ENCODE measurements at regions of chr3 and their contacts with region 1.

Region 1: DNA sequence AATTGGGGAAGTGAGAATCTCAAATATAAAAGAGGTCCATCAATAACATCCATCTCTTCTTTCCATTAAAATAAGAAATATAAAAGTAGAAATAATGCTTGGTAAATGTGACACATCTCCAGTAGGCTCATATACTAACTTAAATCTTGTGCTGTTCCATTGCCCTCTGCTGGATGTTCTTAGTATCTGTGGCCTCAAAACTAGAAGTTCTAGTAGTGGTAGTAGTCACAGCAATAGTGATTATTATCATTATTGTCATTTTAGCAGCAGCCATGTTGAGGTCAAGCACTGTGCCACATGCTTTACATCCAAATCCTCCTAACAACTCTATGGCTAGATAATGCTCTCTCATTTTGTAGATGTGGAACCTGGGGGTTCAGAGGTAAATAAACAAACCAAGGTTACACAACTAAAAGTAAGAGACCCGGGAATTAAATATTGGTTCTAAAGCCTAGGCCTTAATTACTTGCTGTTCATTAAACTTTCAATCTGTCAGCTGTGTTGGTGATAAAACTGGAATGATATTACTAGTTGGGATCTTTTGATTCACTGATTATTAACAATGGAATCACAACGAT is 20.2 kb upstream of the BTLA start:
- DNase-seq: peak in 4 of 7 donors; percentile 12 to 32 (median 20)
- H3K4me3 ChIP-seq: no peak overlapping the region
- H3K27ac ChIP-seq: no peak overlapping the region
- H3K4me1 ChIP-seq: no peaks in the 10 kb centered on the region
- H3K27me3 ChIP-seq: no peaks in the 10 kb centered on the region
- CTCF ChIP-seq: peak; percentile 37 to 78 (median 72)
- POLR2A ChIP-seq: no peak

Region 2: GRCh38 chr3:112111785-112112402 is 407.6 kb before region 1 on chr3:
- intact Hi-C with region 1: loop called in 1 of 2 experiments (anchors 10 kb)
- DNase-seq: peak; percentile 67 to 88 (median 75)
- H3K4me3 ChIP-seq: no peak overlapping the region
- H3K27ac ChIP-seq: no peak overlapping the region
- H3K4me1 ChIP-seq: peaks cover 0 to 5% of the 10 kb centered on the region in 2 donors
- H3K27me3 ChIP-seq: no peaks in the 10 kb centered on the region
- CTCF ChIP-seq: peak; percentile 47 to 74 (median 69)
- POLR2A ChIP-seq: no peak

Region 3: DNA sequence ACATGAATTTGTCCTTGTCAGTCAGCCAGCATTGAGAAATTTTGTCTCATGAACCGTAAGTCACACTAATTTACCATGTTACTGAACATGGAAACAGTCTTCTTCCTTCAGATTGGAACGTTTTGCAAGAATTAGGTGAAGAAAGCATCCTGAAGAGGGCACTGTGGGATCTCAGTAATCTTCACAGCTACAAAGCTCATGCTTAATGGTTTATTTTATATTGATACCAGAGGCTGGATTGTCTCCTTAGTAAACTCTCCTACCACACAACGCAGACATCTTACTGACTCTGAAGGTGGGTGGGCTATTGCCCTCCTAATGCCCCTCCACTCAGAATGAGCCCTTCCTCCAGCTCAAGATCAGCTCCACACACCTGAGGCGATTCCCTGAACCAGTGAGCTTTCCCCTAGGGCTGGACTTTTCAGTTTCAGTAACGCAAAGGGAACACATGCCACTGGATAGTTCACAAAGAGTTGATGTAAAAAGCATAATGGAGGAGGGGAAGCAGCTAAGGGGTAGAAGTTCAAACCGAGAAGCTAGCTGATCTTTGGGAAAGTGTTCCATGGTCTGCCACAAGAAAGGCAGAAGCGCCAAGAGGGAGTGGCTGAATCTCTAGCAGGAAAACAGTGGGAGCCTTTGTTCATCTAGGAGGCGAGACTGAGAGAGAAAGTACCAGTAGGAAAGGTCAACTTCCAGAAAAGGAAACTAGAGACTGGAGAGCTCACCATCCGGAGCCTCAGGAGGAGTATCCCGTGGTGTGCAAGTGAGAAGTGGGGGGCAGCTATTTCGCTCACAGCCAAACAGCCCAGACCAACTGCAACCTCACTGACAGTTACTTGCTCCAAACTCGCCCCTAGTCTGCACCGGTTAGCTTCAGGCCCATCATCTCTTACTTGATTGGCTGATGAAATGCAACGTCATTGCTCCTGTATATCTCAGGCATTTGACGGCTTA is 225.9 kb before region 1 on chr3 and contains the start of gene SLC9C1:
- intact Hi-C with region 1: loop called in 1 of 2 experiments (anchors 10 kb)
- DNase-seq: peak in 6 of 7 donors; percentile 27 to 68 (median 52)
- H3K4me3 ChIP-seq: peak within 1 kb of the TSS in 1 of 4 donors; percentile 32
- H3K27ac ChIP-seq: peak within 1 kb of the TSS in 3 of 5 donors; percentile 4 to 64 (median 35)
- H3K4me1 ChIP-seq: no peaks in the 10 kb centered on the region
- H3K27me3 ChIP-seq: no peaks in the 10 kb centered on the region
- CTCF ChIP-seq: peak; percentile 43 to 67 (median 64)
- POLR2A ChIP-seq: no peak
- total RNA-seq, gene SLC9C1: 0.72 TPM in 1 of 9 donors, not detected in the others

Region 4: GRCh38 chr3:112303764-112304325 is 215.7 kb before region 1 on chr3:
- intact Hi-C with region 1: loop called (anchors 10 kb)
- DNase-seq: peak in 2 of 7 donors; percentile 17 to 56
- H3K4me3 ChIP-seq: peak overlapping the region in 2 of 4 donors; percentile 30 to 80
- H3K27ac ChIP-seq: no peak overlapping the region
- H3K4me1 ChIP-seq: peaks cover 0 to 9% of the 10 kb centered on the region in 2 donors
- H3K27me3 ChIP-seq: no peaks in the 10 kb centered on the region
- CTCF ChIP-seq: no peak
- POLR2A ChIP-seq: no peak

Region 5: GRCh38 chr3:112364291-112364690 is 155.2 kb before region 1 on chr3:
- intact Hi-C with region 1: no loop called
- DNase-seq: no peak
- H3K4me3 ChIP-seq: no peak overlapping the region
- H3K27ac ChIP-seq: no peak overlapping the region
- H3K4me1 ChIP-seq: no peaks in the 10 kb centered on the region
- H3K27me3 ChIP-seq: no peaks in the 10 kb centered on the region
- CTCF ChIP-seq: no peak
- POLR2A ChIP-seq: no peak

Region 6: DNA sequence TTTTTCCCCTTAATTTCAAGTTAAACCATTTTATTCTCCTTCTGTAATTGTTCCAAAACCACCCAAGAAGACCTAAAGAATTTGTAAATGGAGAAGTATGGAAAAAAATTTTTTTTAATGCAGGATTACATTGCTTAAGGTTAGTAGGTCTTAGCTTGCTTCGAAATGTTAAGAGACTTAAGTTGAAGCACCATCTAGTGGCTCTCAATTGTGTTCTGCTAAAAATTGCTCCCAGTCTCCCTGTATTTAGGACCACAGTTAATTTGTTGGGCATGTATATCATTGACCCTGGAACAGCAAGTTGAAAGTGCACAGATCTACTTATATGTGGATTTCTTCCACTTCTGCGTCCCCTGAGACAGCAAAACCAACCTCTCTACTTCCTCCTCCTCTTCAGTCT is 294.8 kb after region 1 on chr3:
- intact Hi-C with region 1: no loop called
- DNase-seq: no peak
- H3K4me3 ChIP-seq: no peak overlapping the region
- H3K27ac ChIP-seq: peak overlapping the region in 1 of 5 donors; percentile 36
- H3K4me1 ChIP-seq: peaks cover 0 to 8% of the 10 kb centered on the region in 2 donors
- H3K27me3 ChIP-seq: no peaks in the 10 kb centered on the region
- CTCF ChIP-seq: peak in 5 of 6 experiments; percentile 19 to 52 (median 44)
- POLR2A ChIP-seq: no peak

Measured in adrenal gland (tissue), 19 donors.